BJ (cell line): ENCODE measurements at regions of chr18 and their contacts with region 1.

Region 1: DNA sequence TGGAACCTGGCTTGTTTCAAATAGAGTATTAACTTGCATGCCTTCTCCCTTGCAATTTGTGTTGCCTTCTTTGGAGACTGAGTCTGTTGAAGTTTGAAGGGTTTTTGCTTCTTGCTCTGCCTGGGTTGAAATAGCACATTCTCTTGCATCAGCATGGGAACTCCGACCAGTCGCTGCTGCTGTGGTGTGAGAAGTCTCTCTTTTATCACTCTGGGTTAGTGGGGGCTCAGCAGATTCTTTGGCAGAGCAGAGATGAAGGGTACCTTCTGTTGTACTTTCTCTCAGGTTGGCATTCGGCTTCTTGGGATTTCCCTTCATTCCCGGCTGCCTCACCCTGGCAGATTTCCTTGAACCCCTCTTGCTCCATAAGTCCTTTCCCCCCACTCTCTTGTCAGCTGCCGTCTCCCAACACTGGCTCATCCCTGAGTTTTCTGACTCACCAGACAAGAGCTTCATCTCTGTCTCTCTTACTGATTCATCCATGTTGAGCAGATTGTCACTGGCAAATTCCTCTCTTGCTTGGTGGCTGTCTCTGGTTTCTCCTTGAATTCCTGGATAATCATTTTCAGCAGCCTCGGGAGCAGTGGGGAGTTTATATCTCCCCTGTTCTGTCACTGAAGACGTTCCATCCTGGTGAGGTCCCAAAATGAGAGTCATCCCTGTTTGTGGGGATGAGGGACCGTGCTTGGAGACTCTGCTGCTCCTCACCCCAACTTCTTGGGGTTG is 49.9 kb downstream of the ALPK2 start:
- DNase-seq: peak; percentile 68
- H3K4me3 ChIP-seq: peak overlapping the region; percentile 57
- H3K27me3 ChIP-seq: no peaks in the 10 kb centered on the region
- CTCF ChIP-seq: no peak

Region 2: DNA sequence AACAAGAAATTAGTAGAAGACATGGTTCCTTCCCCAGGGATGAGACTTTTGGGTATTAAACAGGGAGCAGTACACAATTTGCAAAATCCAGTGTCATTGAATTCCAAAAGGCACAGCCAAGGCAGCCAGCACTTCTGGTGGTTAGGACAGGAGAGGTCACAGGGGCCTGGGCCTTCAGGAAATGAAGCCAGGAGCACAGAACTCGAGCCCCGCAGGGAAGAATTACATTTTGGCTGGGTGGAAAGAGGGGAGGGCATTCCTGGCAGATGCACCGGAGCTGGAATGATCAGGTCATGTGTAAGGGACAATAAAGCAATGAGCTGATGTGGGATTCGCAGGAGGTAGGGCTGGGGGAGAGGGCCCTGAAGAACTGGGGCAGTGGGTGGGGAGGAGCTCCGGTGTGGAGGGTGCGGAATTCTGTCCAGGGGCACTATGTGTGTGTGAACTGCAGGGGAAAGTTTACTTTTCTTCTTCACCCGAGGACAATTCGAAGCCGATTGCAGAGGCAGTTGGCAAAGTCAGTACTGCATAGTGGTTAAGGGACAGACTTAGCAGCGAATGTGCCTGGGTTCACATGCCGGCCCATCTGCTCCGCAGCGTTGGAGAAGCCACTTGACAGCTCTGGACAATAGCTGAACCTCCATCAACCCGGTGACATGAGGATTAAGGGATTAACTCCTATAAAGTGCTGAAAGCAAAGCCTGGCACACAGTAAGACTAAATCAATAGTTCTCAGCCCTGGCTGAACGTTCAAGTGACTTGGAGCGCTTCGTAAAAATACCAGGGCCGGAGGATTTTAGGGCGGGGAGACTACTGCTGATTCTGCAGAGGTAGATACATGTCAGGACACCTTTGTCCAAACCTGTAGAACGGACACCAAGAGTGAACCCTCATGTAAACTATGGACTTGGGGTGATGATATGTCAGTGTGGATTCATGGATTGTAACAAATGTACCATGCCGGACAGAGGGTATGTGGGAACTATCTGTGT is 13.5 kb after region 1 on chr18:
- CTCF ChIA-PET with region 1: interaction called, 4 read pairs
- POLR2A ChIA-PET with region 1: interaction called, 14 read pairs
- DNase-seq: no peak
- H3K4me3 ChIP-seq: no peak overlapping the region
- H3K27me3 ChIP-seq: no peaks in the 10 kb centered on the region
- CTCF ChIP-seq: no peak

Region 3: DNA sequence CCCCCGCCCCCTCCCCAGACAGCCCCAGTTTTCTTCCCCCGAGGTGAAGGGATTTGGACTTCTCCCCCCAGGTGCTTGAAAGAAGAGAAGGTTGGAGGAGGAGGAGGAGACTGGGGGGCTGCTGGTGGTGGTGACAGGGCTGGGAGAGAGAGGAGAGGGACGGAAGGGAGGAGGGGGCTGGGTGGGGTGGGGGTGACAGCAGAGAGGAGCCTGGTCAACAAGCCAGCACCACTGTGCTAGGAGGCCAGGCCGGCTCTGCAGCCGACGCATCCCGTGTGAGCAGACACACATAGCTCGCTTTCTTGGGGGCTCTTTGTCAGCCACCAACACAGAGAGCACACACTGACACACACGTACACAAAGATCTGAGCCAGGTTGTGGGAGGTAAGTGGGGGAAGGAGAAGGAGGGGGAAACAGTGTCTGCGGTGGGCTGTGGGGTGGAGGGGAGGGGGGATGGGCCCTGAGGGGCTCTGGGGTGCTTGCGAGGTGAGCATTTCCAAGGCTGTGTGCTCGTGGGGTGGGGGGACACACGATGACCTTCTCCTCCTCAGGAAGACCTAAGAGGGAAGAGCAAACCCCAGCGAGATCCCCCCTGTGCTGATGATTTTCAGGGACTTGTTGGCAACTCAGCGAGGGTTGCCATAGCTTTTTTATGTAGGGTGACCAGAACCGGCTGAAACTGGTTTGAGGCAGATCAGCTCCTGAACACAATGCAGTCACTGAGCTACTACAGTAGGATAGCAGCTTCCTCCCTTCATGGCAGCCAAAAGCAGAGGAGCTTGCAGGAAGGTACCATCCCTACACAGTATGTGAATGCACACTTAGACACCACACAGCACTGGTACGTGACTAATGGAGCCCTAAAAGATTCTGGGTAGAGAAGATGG is 285.4 kb after region 1 on chr18 and contains the start of gene ZNF532:
- CTCF ChIA-PET with region 1: no interaction called
- POLR2A ChIA-PET with region 1: interaction called, 16 read pairs
- DNase-seq: no peak
- H3K4me3 ChIP-seq: peak within 1 kb of the TSS; percentile 37
- H3K27me3 ChIP-seq: no peaks in the 10 kb centered on the region
- CTCF ChIP-seq: no peak
- polyA plus RNA-seq, gene ZNF532: 69.6 and 75.3 TPM in 2 replicates